AG04450 (cell line): ENCODE measurements at regions of chr2 and their contacts with region 1.

Region 1: DNA sequence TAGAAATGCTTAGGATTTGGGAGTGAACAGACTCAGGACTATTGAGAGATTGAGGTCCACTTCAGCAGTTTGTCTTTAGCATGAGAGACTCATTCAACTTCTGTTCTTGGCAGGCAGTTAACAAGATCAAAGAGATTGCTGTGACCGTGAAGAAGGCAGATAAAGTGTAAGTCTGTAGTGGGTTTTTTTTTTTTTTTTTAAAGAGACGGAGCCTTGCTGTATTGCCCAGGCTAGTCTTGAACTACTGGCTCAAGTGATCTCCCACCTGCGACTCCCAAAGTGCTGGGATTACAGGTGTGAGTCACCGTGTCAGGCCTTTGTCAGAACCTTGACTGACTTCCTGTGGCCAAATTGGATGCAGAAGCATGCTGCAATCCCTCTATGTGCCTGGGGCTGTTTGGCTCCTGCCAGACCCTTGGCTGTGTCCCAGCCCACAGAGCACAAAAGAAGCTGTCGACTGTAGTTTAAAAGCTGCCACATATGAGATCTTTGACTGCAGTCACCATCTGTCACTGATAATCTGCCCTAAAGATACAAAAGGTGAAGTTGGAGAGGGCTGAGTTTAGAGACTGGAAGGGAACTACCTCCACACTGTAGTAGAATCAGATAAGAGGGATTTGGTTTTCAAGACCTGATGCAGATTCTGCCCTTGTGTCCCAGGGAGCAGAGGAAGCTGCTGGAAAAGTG is 9.9 kb downstream of the CCT7 start:
- DNase-seq: no peak
- H3K4me3 ChIP-seq: no peak overlapping the region
- H3K27ac ChIP-seq: no peak overlapping the region
- H3K27me3 ChIP-seq: no peaks in the 10 kb centered on the region
- CTCF ChIP-seq: no peak

Region 2: DNA sequence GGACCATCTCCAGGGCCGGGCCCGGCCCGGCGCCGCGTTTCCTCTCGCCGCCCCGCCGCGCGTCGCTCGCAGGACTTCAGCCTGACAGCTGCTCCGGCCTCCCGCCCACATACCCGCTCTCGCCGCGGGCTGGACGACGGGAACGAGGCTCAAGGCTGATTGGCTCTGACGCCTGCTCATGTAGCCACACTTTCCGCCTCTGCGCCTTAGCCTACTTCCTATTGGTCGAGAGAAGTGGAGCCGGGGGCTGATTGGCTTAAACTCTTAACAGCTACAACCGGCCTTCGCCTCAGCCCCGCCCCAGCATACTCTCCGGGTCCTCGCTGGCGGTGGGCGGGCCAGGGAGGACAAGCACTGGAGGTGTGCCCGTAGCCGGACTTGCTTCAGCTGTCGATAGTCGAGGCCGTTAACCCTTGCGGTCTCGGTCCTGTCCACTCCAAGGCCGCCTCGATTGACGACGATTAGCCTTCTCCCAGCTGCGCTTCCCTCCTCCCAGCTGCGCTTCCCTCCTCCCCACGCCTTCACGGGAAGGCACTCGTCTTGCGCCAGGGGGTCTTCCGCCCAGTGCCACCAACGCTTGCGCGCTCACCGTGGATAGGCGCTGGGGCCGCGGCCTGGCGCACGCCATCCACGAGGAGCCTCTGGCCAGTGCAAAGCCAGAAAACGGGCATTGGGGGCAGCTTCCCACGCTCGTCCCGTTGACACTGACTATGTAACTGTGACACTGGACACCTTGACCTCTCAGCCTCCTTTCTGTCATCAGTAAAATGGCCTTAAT is 10.7 kb before region 1 on chr2 and contains the start of gene PRADC1:
- CTCF ChIA-PET with region 1: no interaction called
- POLR2A ChIA-PET with region 1: interaction called, 14 read pairs
- DNase-seq: peak; percentile 99
- H3K4me3 ChIP-seq: peak within 1 kb of the TSS; percentile 94
- H3K27ac ChIP-seq: peak within 1 kb of the TSS; percentile 79
- H3K27me3 ChIP-seq: no peaks in the 10 kb centered on the region
- CTCF ChIP-seq: no peak
- polyA plus RNA-seq, gene PRADC1: 11.6 and 12.0 TPM in 2 replicates